Activated naive CD4-positive, alpha-beta T cell treated with anti-CD3 and anti-CD28 coated beads for 36 hours (primary cell): ENCODE measurements at regions of chr15 and their contacts with region 1.

Region 1: DNA sequence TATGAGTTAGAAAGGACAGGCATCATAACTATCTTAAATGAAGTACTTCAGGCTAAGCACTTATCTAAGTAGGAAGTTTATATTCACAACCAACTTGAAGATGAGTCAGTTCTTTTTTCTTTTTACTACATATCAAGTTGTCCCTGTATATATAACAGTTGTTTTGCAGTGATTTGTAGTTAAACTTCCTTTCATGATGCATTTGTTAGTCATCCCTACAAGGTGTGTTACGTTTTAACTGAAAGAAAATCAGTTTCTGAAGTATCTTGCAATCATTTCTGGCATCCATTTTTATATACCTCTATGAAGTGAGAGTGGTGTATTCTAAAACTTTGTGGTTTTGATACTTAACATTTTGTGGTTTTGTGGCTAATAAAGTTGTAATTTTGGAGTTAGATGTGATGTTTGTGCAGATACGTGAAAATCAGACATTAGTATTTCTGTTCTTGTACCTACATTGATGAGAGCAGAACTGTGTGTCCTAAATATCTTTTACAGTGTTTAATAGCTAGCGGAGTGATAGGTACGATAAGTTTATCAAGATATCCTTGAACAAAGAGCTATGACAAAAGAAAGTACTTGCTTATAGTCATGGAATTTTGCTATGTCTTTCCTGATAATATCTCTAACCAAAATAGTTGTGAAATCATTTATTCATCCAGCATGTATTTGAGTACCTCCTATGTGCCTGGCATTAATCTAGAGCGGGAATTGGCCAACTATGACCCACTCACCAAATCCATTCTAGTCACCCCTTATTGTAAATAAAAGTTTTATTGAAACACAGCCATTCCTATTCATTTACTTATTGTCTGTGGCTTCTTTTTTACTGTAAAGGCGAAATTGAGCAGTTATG is 46.3 kb downstream of the ZFAND6 start:
- DNase-seq: no peak
- H3K4me3 Mint-ChIP-seq: no peak overlapping the region
- H3K27ac Mint-ChIP-seq: no peak overlapping the region
- H3K4me1 Mint-ChIP-seq: peaks cover 45% of the 10 kb centered on the region
- H3K27me3 Mint-ChIP-seq: no peaks in the 10 kb centered on the region

Region 2: GRCh38 chr15:80031841-80032240 is 74.0 kb before region 1 on chr15:
- CTCF ChIA-PET with region 1: no interaction called
- intact Hi-C with region 1: loop called (anchors 2 kb)
- DNase-seq: peak; percentile 58
- H3K4me3 Mint-ChIP-seq: no peak overlapping the region
- H3K27ac Mint-ChIP-seq: no peak overlapping the region
- H3K4me1 Mint-ChIP-seq: peaks cover 22% of the 10 kb centered on the region
- H3K27me3 Mint-ChIP-seq: no peaks in the 10 kb centered on the region

Region 3: DNA sequence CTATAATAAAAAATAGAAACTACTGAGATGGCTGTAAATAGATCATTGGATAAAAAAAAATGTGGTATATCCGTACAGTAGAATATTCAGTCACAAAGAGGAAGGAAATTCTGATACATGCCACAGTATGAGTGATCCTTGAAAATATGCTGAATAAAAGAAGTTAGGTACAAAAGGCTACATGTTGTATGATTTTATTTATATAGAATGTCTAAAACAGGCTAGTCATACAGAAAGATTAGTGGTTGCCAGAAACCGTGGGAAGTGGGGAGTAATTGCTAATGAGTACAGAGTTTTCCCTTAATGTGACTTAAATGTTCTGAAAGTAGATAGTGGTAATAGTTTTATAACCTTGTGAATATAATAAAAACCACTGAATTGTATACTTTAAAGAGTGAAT is 22.1 kb after region 1 on chr15:
- CTCF ChIA-PET with region 1: no interaction called
- intact Hi-C with region 1: no loop called
- DNase-seq: no peak
- H3K4me3 Mint-ChIP-seq: no peak overlapping the region
- H3K27ac Mint-ChIP-seq: no peak overlapping the region
- H3K4me1 Mint-ChIP-seq: peaks cover 3% of the 10 kb centered on the region
- H3K27me3 Mint-ChIP-seq: no peaks in the 10 kb centered on the region